ENCODE measurements at regions of chr1 and their contacts with region 1.

Region 1: GRCh38 chr1:205591522-205592351 is 40.1 kb downstream of the ELK4 start:
- DNase-seq: peak; percentile 77 to 92 (median 89)
- H3K4me3 ChIP-seq: peak overlapping the region; percentile 26
- H3K27ac ChIP-seq: no peak overlapping the region
- H3K4me1 ChIP-seq: no peaks in the 10 kb centered on the region
- H3K27me3 ChIP-seq: no peaks in the 10 kb centered on the region
- CTCF ChIP-seq: peak; percentile 89 to 99 (median 98)
- EP300 ChIP-seq: no peak
- POLR2A ChIP-seq: no peak

Region 2: GRCh38 chr1:205536759-205537361 is 54.9 kb before region 1 on chr1:
- intact Hi-C with region 1: loop called in 1 of 4 experiments (anchors 10 kb)
- DNase-seq: peak in 1 of 5 donors; percentile 15
- H3K4me3 ChIP-seq: no peak overlapping the region
- H3K27ac ChIP-seq: no peak overlapping the region
- H3K4me1 ChIP-seq: no peaks in the 10 kb centered on the region
- H3K27me3 ChIP-seq: no peaks in the 10 kb centered on the region
- CTCF ChIP-seq: no peak
- EP300 ChIP-seq: no peak
- POLR2A ChIP-seq: no peak

Region 3: DNA sequence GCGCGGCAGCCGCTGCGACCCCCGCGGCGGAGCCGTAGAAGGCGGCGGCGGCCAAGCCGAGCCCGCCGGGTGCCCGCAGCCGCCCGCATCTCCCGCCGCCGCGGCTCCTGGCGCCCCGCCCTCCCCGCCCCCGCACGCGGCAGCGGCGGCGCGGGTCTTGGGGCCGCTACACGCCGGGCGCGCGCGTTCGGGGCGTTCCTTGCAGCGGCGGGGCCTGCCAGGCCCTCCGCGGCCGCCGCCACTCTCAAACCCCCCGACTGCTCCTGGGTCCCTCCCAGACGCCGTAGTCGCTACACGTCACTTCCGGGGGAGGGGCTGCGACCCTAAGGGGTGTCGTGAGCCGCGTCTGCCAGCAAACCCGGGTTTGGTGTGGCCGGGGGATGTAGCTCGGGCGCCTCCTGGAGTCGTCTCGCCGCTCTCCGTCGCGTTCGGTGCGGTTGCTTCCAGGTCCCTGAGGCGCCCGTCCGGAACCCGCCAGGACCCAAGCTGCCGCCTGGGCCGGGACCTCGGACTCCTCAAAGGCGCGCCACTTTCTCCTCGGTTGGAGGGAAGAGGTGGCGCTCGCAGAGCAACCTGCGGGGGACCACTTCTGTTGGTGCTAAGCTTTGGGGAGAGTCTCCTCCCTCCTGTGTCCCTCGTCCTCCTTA is 40.1 kb after region 1 on chr1 and contains the start of gene ELK4:
- intact Hi-C with region 1: loop called in 3 of 4 experiments (anchors 2 to 5 kb)
- DNase-seq: peak; percentile 99
- H3K4me3 ChIP-seq: peak within 1 kb of the TSS; percentile 72
- H3K27ac ChIP-seq: peak within 1 kb of the TSS; percentile 92 to 97
- H3K4me1 ChIP-seq: peaks cover 2% of the 10 kb centered on the region
- H3K27me3 ChIP-seq: no peaks in the 10 kb centered on the region
- CTCF ChIP-seq: peak in 2 of 3 donors; percentile 75 to 91
- EP300 ChIP-seq: no peak
- POLR2A ChIP-seq: peak; percentile 95
- total RNA-seq, gene ELK4: 16.3 to 69.5 (median 55.1) TPM

Region 4: GRCh38 chr1:205658943-205659581 is 67.3 kb after region 1 on chr1:
- intact Hi-C with region 1: loop called (anchors 2 to 5 kb)
- DNase-seq: peak; percentile 80 to 91 (median 86)
- H3K4me3 ChIP-seq: no peak overlapping the region
- H3K27ac ChIP-seq: no peak overlapping the region
- H3K4me1 ChIP-seq: peaks cover 3% of the 10 kb centered on the region
- H3K27me3 ChIP-seq: no peaks in the 10 kb centered on the region
- CTCF ChIP-seq: peak; percentile 68 to 91 (median 84)
- EP300 ChIP-seq: no peak
- POLR2A ChIP-seq: no peak

Region 5: GRCh38 chr1:205711104-205712020 is 119.6 kb after region 1 on chr1:
- intact Hi-C with region 1: loop called in 1 of 4 experiments (anchors 5 kb)
- DNase-seq: peak in 3 of 5 donors; percentile 58 to 74 (median 63)
- H3K4me3 ChIP-seq: no peak overlapping the region
- H3K27ac ChIP-seq: no peak overlapping the region
- H3K4me1 ChIP-seq: peaks cover 7% of the 10 kb centered on the region
- H3K27me3 ChIP-seq: no peaks in the 10 kb centered on the region
- CTCF ChIP-seq: peak; percentile 55 to 79 (median 73)
- EP300 ChIP-seq: no peak
- POLR2A ChIP-seq: no peak

Region 6: GRCh38 chr1:205983925-205984725 is 392.4 kb after region 1 on chr1:
- intact Hi-C with region 1: loop called in 1 of 4 experiments (anchors 10 kb)
- DNase-seq: peak; percentile 42 to 70 (median 57)
- H3K4me3 ChIP-seq: no peak overlapping the region
- H3K27ac ChIP-seq: no peak overlapping the region
- H3K4me1 ChIP-seq: peaks cover 2% of the 10 kb centered on the region
- H3K27me3 ChIP-seq: no peaks in the 10 kb centered on the region
- CTCF ChIP-seq: peak in 1 of 3 donors; percentile 30
- EP300 ChIP-seq: no peak
- POLR2A ChIP-seq: no peak

Measured in ovary (tissue), 10 donors.